ENCODE measurements at regions of chr20 and their contacts with region 1.

Region 1: GRCh38 chr20:58650776-58651558 is at the start of gene STX16:
- DNase-seq: peak; percentile 87
- H3K4me3 ChIP-seq: peak within 1 kb of the TSS; percentile 86 to 93 (median 89)
- H3K27ac ChIP-seq: peak within 1 kb of the TSS; percentile 81
- H3K4me1 ChIP-seq: peaks cover 31% of the 10 kb centered on the region
- H3K27me3 ChIP-seq: no peaks in the 10 kb centered on the region
- CTCF ChIP-seq: peak; percentile 46 to 65
- POLR2A ChIP-seq: peak; percentile 68
- total RNA-seq, gene STX16: 58.5 and 63.5 TPM in 2 replicates

Region 2: GRCh38 chr20:58481481-58482021 is 169.4 kb before region 1 on chr20:
- CTCF ChIA-PET with region 1: interaction called, 71 read pairs
- POLR2A ChIA-PET with region 1: no interaction called
- dilution Hi-C with region 1: no loop called
- intact Hi-C with region 1: loop called (anchors 1 kb)
- DNase-seq: peak; percentile 46
- H3K4me3 ChIP-seq: no peak overlapping the region
- H3K27ac ChIP-seq: no peak overlapping the region
- H3K4me1 ChIP-seq: peaks cover 4% of the 10 kb centered on the region
- H3K27me3 ChIP-seq: no peaks in the 10 kb centered on the region
- CTCF ChIP-seq: peak; percentile 74 to 88
- POLR2A ChIP-seq: no peak

Region 3: GRCh38 chr20:58623826-58624473 is 27.0 kb before region 1 on chr20:
- CTCF ChIA-PET with region 1: interaction called, 10 read pairs
- POLR2A ChIA-PET with region 1: no interaction called
- dilution Hi-C with region 1: no loop called
- intact Hi-C with region 1: no loop called
- DNase-seq: peak; percentile 93
- H3K4me3 ChIP-seq: no peak overlapping the region
- H3K27ac ChIP-seq: peak overlapping the region; percentile 76
- H3K4me1 ChIP-seq: peaks cover 29% of the 10 kb centered on the region
- H3K27me3 ChIP-seq: no peaks in the 10 kb centered on the region
- CTCF ChIP-seq: no peak
- POLR2A ChIP-seq: peak; percentile 48

Region 4: GRCh38 chr20:58692594-58693226 is 41.7 kb after region 1 on chr20 and contains the start of gene NPEPL1:
- CTCF ChIA-PET with region 1: interaction called, 6 read pairs
- POLR2A ChIA-PET with region 1: interaction called, 3 read pairs
- dilution Hi-C with region 1: no loop called
- intact Hi-C with region 1: loop called (anchors 2 kb)
- DNase-seq: peak; percentile 45
- H3K4me3 ChIP-seq: peak within 1 kb of the TSS in 2 of 3 experiments; percentile 27 to 49
- H3K27ac ChIP-seq: peak within 1 kb of the TSS; percentile 79
- H3K4me1 ChIP-seq: peaks cover 14% of the 10 kb centered on the region
- H3K27me3 ChIP-seq: no peaks in the 10 kb centered on the region
- CTCF ChIP-seq: no peak
- POLR2A ChIP-seq: peak; percentile 45
- total RNA-seq, gene NPEPL1: 39.1 and 40.8 TPM in 2 replicates

Region 5: GRCh38 chr20:58907399-58908137 is 256.6 kb after region 1 on chr20:
- CTCF ChIA-PET with region 1: interaction called, 3 read pairs
- POLR2A ChIA-PET with region 1: no interaction called
- dilution Hi-C with region 1: no loop called
- intact Hi-C with region 1: loop called (anchors 5 kb)
- DNase-seq: peak; percentile 97
- H3K4me3 ChIP-seq: peak overlapping the region in 1 of 3 experiments; percentile 39
- H3K27ac ChIP-seq: peak overlapping the region; percentile 97
- H3K4me1 ChIP-seq: peaks cover 34% of the 10 kb centered on the region
- H3K27me3 ChIP-seq: no peaks in the 10 kb centered on the region
- CTCF ChIP-seq: no peak
- POLR2A ChIP-seq: no peak

Measured in endothelial cell of umbilical vein (primary cell).